A673 (cell line): ENCODE measurements at regions of chr14 and their contacts with region 1.

Region 1: DNA sequence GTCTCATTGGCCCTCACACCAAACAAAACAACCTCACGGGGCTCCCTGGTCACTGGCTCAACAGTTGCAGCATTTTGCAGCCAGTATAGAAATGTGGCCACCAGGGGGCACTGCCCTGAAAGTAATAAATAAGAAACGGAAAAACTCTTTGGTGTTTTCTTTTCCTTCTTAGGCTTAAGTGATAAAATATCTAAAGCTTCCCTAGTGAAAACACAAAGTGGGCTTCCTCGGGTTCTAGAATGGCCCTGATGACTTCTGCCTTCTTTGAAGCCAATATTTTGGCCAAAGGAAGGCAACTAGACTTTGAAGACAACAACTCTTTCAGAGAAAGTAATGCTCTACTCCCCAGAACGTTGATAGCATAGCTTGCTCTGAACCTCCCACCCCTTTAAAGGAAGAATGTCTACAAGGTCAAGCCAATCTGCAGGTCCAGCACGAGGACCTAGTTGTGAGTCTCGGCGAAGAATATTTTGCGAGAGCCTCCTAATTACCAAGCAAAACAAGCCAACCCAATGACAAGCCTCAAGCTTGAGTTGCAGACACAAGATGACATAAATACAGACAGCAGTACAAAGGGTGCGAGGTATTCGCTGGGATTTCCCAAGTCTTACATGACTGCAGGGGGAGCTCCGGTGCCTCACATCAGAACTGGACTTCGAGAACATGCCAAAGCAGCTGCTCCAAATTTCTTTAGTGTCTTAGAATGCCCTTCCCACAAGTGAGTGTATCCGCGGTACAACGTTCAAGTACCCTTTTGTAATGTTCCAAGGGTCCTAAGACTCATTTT is 2.6 kb downstream of the ITPK1 start:
- DNase-seq: peak; percentile 87
- H3K4me3 ChIP-seq: peak overlapping the region; percentile 80
- H3K27ac ChIP-seq: peak overlapping the region; percentile 5
- H3K4me1 ChIP-seq: peaks cover 14% of the 10 kb centered on the region
- H3K27me3 ChIP-seq: no peaks in the 10 kb centered on the region
- CTCF ChIP-seq: peak; percentile 84

Region 2: DNA sequence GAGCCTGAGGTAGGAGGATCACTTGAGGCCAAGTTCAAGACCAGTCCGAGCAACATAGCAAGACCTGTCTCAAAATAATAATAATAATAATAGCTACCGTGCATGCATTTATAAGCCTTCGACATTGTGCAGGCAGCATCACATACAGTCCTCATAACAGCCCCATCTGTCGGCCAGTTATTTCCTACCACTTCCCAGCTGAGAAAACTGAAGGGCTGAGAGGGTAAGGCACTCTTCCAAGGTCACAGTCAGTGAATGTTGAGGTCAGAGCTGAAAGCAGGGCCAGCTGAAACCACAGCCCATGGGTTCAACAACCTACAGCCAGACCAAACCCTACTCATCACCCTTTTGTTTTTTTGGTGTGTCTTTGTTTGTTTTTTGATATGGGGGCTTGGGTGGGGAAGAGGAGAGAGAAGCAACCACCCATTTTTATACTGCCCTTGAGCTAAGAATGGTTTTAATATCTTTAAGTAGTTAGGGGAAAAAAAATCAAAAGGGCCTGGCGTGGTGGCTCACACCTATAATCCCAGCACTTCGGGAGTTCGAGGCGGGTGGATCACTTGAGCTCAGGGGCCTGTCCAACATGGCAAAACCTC is 19.5 kb after region 1 on chr14:
- CTCF ChIA-PET with region 1: interaction called, 15 read pairs
- POLR2A ChIA-PET with region 1: no interaction called
- intact Hi-C with region 1: no loop called
- DNase-seq: no peak
- H3K4me3 ChIP-seq: no peak overlapping the region
- H3K27ac ChIP-seq: no peak overlapping the region
- H3K4me1 ChIP-seq: no peaks in the 10 kb centered on the region
- H3K27me3 ChIP-seq: no peaks in the 10 kb centered on the region
- CTCF ChIP-seq: peak; percentile 52

Region 3: GRCh38 chr14:93163570-93163969 is 50.5 kb after region 1 on chr14:
- CTCF ChIA-PET with region 1: interaction called, 11 read pairs
- POLR2A ChIA-PET with region 1: no interaction called
- intact Hi-C with region 1: no loop called
- DNase-seq: no peak
- H3K4me3 ChIP-seq: no peak overlapping the region
- H3K27ac ChIP-seq: no peak overlapping the region
- H3K4me1 ChIP-seq: no peaks in the 10 kb centered on the region
- H3K27me3 ChIP-seq: no peaks in the 10 kb centered on the region
- CTCF ChIP-seq: no peak

Region 4: GRCh38 chr14:93219103-93219726 is 106.1 kb after region 1 on chr14:
- CTCF ChIA-PET with region 1: interaction called, 16 read pairs
- POLR2A ChIA-PET with region 1: no interaction called
- intact Hi-C with region 1: no loop called
- DNase-seq: peak; percentile 70
- H3K4me3 ChIP-seq: no peak overlapping the region
- H3K27ac ChIP-seq: no peak overlapping the region
- H3K4me1 ChIP-seq: no peaks in the 10 kb centered on the region
- H3K27me3 ChIP-seq: no peaks in the 10 kb centered on the region
- CTCF ChIP-seq: peak; percentile 73

Region 5: GRCh38 chr14:93619176-93619793 is 506.2 kb after region 1 on chr14:
- CTCF ChIA-PET with region 1: interaction called, 12 read pairs
- POLR2A ChIA-PET with region 1: no interaction called
- intact Hi-C with region 1: loop called (anchors 1 kb)
- DNase-seq: peak; percentile 71
- H3K4me3 ChIP-seq: no peak overlapping the region
- H3K27ac ChIP-seq: no peak overlapping the region
- H3K4me1 ChIP-seq: no peaks in the 10 kb centered on the region
- H3K27me3 ChIP-seq: peaks cover 16% of the 10 kb centered on the region
- CTCF ChIP-seq: peak; percentile 80